Left colon (tissue), 2 donors: ENCODE measurements at regions of chr12 and their contacts with region 1.

Region 1: GRCh38 chr12:17763366-17763765 is 326.6 kb downstream of the RERGL start:
- DNase-seq: no peak
- ATAC-seq: no peak

Region 2: DNA sequence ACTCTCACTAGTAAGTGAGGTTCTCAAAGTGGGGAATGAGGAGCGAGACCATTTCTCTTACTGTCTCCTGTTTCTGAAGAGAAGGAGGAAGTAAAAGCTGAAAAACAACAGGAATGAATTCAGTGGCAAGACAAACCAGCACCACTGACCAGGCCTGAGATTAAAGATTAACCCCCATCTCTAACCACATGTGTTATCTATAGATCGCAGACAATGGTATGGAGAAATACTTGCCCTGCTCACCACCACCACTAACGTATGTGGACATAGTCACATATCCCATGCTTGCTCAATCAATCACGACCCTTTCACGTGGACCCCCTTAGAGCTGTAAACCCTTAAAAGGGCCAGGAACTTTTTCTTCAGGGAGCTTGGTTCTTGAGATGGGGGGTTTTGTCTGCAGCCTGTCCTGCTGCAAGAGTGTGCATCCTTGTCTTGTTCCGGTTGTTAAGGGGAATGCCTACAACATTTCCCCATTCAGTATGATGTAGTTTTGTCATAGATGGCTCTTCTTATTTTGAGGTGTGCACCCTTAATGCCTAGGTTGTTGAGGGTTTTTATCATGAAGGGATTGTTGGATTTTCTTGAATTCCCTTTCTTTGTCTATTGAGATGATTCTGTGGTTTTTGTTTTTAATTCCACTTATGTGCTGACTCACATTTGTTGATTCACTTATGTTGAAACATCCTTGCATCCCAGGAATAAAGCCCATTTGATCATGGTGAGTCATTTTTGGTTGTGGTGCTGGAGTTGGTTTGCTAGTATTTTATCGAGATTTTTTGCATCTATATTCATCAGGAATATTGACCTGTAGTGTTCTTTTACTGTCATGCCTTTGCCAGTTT is 458.6 kb before region 1 on chr12:
- intact Hi-C with region 1: no loop called
- DNase-seq: no peak
- ATAC-seq: no peak

Region 3: DNA sequence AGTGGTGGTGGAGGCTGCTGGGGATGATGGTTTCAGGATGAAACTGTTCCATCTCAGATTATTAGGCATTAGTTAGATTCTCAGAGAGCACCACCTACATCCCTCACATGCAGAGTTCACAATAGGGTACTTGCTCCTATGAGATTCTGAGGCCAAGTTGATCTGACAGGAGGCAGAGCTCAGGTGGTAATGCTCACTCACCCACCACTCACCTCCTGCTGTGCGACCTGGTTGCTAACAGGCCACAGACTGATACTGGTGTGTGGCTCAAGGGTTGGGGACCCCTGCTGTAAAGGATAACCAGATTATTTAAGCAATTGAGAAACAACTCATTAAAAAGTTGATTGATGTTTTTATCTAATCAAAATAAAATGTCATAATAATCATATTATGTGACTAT is 78.1 kb after region 1 on chr12:
- intact Hi-C with region 1: loop called in 1 of 2 experiments (anchors 10 kb)
- DNase-seq: no peak
- ATAC-seq: no peak

Region 4: DNA sequence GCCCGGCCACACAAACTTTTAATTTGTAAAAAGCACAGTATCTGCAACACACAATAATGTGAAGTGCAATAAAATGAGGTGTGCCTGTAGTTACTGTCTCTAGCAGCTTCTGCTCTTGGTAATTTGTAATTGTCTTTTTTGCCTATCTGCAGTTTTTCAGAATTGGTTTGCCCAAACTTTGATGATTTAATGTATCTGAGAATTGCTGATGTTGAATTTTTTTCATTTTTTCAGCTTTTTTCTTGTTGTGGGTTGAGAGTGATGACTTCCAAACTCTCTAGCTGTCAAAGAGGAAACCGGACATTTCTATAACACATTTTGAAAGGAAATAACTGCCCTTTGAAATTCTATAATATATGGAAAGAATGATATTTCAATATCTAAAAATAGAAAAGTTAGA is 89.7 kb after region 1 on chr12:
- intact Hi-C with region 1: loop called (anchors 2 to 10 kb)
- DNase-seq: no peak
- ATAC-seq: no peak